ENCODE measurements at regions of chr5 and their contacts with region 1.

Region 1: DNA sequence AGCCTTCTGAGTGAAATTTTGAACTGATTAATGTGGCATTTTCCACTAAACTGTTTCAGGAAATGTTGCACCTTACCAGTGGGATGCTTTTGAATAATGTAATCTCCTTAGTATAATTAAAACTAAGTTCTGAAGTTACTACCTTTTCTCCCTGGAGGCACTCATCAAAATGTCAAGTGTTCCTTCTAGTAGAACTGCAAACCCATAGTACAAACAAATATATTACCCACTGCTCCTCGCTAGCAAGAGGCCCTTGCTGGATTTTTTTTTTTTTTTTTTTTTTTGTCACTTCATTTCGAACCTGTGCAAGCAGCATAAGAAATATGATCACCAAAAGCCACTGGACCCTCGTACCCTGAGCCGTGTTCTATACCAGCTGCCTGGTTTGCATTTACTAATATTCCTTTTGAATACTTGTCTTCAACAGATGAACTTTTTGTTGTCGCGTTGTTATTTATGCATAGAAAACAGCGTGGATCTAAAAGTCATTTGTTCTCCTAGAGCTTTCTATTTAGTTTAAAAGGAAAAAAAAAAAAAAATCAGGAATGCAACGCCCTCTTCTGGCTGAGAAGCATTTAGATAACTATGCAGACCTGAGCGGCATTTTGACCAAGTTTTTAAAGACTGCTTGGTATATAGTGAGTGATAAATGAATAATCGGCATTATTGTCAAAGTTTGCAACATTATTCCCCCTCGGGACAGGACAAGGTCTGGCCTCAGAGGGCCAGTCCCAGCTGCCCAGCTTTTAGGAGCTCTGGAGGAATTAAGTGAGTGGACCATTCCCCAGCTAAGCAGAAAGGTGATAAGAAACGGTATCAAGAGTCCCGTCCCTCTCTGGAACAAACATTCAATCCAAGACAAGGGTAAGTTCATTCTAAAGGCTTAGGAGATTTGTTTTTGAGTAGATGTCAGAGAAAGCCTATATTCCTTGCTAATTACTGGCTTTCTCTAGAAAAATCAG is 162.5 kb upstream of the KIF2A start:
- DNase-seq: no peak
- ATAC-seq: peak; percentile 47
- H3K4me3 Mint-ChIP-seq: peak overlapping the region; percentile 19
- H3K27ac Mint-ChIP-seq: no peak overlapping the region
- H3K4me1 Mint-ChIP-seq: peaks cover 38% of the 10 kb centered on the region
- H3K27me3 Mint-ChIP-seq: peaks cover 3% of the 10 kb centered on the region; the same call in 1 of the 2 replicates
- CTCF ChIP-seq: no peak

Region 2: GRCh38 chr5:62043289-62044280 is 100.0 kb before region 1 on chr5:
- CTCF ChIA-PET with region 1: interaction called, 14 read pairs
- POLR2A ChIA-PET with region 1: no interaction called
- DNase-seq: peak; percentile 35
- ATAC-seq: peak; percentile 92
- H3K4me3 Mint-ChIP-seq: peak overlapping the region; percentile 50
- H3K27ac Mint-ChIP-seq: peak overlapping the region; percentile 95
- H3K4me1 Mint-ChIP-seq: peaks cover 46% of the 10 kb centered on the region
- H3K27me3 Mint-ChIP-seq: peaks cover 93% of the 10 kb centered on the region
- CTCF ChIP-seq: no peak

Region 3: GRCh38 chr5:62130100-62130499 is 13.4 kb before region 1 on chr5:
- CTCF ChIA-PET with region 1: interaction called, 10 read pairs
- POLR2A ChIA-PET with region 1: no interaction called
- DNase-seq: no peak
- ATAC-seq: no peak
- H3K4me3 Mint-ChIP-seq: no peak overlapping the region
- H3K27ac Mint-ChIP-seq: no peak overlapping the region
- H3K4me1 Mint-ChIP-seq: peaks cover 5% of the 10 kb centered on the region; the same call in 1 of the 2 replicates
- H3K27me3 Mint-ChIP-seq: no peaks in the 10 kb centered on the region
- CTCF ChIP-seq: no peak

Region 4: GRCh38 chr5:62297026-62297425 is 153.5 kb after region 1 on chr5:
- CTCF ChIA-PET with region 1: no interaction called
- POLR2A ChIA-PET with region 1: no interaction called
- DNase-seq: no peak
- ATAC-seq: no peak
- H3K4me3 Mint-ChIP-seq: no peak overlapping the region
- H3K27ac Mint-ChIP-seq: no peak overlapping the region
- H3K4me1 Mint-ChIP-seq: no peaks in the 10 kb centered on the region
- H3K27me3 Mint-ChIP-seq: peaks cover 49% of the 10 kb centered on the region
- CTCF ChIP-seq: no peak

Measured in WTC11 (cell line).